Gastrocnemius medialis (tissue), 4 donors: ENCODE measurements at regions of chr4 and their contacts with region 1.

Region 1: DNA sequence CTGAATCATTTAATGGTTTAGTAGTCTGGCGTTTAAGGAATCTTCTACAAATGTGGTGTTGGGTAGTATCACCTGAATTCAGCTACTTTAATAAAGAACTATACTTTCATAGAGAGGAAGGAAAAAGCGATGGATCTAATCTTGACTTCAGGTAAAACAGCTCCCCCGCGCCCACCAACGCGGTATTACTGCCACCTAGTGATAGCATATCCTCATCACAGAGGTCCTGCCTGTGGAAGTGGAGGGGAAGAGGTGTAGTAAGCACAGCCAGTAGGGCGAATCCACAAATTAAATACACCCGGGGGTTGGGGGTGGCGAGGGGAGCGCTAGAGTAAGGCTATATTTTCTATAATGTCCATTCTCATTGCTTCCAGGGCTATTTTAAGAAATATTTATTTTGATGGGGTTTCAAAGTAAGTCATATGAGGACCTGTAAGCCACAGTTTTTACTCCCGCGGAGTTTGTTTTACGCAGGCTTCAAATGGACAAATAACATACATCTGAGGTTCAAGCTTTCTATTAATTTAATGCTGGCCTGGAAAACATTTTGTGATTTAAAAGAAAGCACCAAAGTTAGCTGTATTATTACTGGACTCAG is 8.3 kb upstream of the DAPP1 start:
- DNase-seq: peak; percentile 55 to 77
- ATAC-seq: peak; percentile 85 to 94
- H3K4me3 ChIP-seq: no peak overlapping the region
- H3K27ac ChIP-seq: peak overlapping the region in 1 of 4 donors; percentile 51
- H3K4me1 ChIP-seq: peaks cover 18 to 21% of the 10 kb centered on the region in 2 donors
- H3K27me3 ChIP-seq: no peaks in the 10 kb centered on the region
- CTCF ChIP-seq: peak; percentile 74 to 82 (median 78)
- POLR2A ChIP-seq: no peak

Region 2: DNA sequence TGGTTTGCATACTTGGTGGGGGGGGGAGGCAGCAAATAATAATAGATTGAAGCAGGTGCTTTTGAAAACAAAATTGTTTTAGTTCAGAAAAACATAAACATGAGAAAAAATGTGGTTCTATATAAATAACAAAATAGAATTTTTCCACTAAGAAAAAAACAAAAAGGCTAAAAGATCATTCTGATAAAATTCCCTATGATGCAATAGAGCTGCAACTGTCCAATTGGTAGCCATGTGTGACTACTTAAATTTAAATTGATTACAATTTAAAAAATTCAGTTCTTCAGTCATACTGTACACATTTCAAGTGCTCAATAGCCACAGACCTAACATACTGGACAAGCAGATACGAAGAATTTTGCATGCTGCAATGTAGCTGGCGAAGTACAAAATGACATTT is 255.5 kb before region 1 on chr4:
- in situ Hi-C with region 1: loop called (anchors 5 to 10 kb)
- intact Hi-C with region 1: no loop called
- DNase-seq: no peak
- ATAC-seq: no peak
- H3K4me3 ChIP-seq: no peak overlapping the region
- H3K27ac ChIP-seq: no peak overlapping the region
- H3K4me1 ChIP-seq: no peaks in the 10 kb centered on the region
- H3K27me3 ChIP-seq: no peaks in the 10 kb centered on the region
- CTCF ChIP-seq: no peak
- POLR2A ChIP-seq: no peak

Region 3: GRCh38 chr4:99615170-99615820 is 193.1 kb before region 1 on chr4:
- in situ Hi-C with region 1: no loop called
- intact Hi-C with region 1: loop called (anchors 5 kb)
- DNase-seq: peak; percentile 8 to 35
- ATAC-seq: peak; percentile 62 to 79
- H3K4me3 ChIP-seq: no peak overlapping the region
- H3K27ac ChIP-seq: peak overlapping the region in 2 of 4 donors; percentile 48 to 64
- H3K4me1 ChIP-seq: peaks cover 33 to 43% of the 10 kb centered on the region in 2 donors
- H3K27me3 ChIP-seq: no peaks in the 10 kb centered on the region
- CTCF ChIP-seq: peak in 1 of 5 experiments; percentile 37
- POLR2A ChIP-seq: no peak

Region 4: DNA sequence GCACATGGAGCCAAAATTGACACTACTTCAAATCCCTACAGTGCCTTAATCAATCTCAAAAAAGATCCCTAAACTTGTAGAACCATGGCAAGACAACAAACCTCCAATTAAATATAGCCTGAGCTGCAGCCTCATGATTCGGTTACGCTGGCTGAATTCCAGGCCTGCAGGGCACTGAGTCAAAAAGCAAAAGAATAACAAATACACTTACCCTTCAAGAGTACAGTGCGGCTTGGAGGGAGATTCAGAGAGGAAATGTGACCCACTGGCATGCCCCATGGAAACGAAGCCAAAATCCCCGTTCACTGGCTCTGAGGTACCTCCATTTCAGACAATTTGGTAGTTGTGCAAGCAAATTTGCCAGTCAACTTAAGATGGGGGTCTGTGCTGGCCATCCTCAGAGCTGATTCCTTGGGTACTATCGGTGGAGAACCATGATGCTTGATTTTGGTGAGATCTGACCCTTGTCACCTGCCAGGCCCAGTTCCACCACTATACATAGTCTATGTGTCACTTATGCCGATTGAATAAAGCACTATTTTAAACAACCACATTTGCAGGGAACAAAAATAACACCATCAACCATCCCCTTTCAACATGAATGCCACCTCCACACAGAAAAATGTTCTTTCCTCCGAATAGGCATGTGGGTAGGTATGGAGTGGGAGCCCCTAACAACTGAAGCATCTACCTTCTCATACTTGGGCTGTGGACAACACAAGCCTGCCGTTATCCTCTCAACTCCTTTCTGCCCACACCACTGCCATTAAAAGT is 152.9 kb before region 1 on chr4:
- in situ Hi-C with region 1: loop called in 1 of 4 experiments (anchors 10 kb)
- intact Hi-C with region 1: no loop called
- DNase-seq: peak; percentile 78 to 80
- ATAC-seq: peak; percentile 14 to 50
- H3K4me3 ChIP-seq: peak overlapping the region; percentile 62 to 75 (median 62)
- H3K27ac ChIP-seq: peak overlapping the region; percentile 94 to 99 (median 98)
- H3K4me1 ChIP-seq: peaks cover 47 to 55% of the 10 kb centered on the region in 2 donors
- H3K27me3 ChIP-seq: no peaks in the 10 kb centered on the region
- CTCF ChIP-seq: no peak
- POLR2A ChIP-seq: peak in 1 of 2 donors; percentile 30

Region 5: GRCh38 chr4:99723612-99724011 is 84.7 kb before region 1 on chr4:
- in situ Hi-C with region 1: no loop called
- intact Hi-C with region 1: loop called (anchors 5 kb)
- DNase-seq: peak; percentile 83 to 94
- ATAC-seq: peak; percentile 97 to 98
- H3K4me3 ChIP-seq: no peak overlapping the region
- H3K27ac ChIP-seq: peak overlapping the region; percentile 89 to 95 (median 91)
- H3K4me1 ChIP-seq: peaks cover 38 to 48% of the 10 kb centered on the region in 2 donors
- H3K27me3 ChIP-seq: no peaks in the 10 kb centered on the region
- CTCF ChIP-seq: no peak
- POLR2A ChIP-seq: no peak

Region 6: DNA sequence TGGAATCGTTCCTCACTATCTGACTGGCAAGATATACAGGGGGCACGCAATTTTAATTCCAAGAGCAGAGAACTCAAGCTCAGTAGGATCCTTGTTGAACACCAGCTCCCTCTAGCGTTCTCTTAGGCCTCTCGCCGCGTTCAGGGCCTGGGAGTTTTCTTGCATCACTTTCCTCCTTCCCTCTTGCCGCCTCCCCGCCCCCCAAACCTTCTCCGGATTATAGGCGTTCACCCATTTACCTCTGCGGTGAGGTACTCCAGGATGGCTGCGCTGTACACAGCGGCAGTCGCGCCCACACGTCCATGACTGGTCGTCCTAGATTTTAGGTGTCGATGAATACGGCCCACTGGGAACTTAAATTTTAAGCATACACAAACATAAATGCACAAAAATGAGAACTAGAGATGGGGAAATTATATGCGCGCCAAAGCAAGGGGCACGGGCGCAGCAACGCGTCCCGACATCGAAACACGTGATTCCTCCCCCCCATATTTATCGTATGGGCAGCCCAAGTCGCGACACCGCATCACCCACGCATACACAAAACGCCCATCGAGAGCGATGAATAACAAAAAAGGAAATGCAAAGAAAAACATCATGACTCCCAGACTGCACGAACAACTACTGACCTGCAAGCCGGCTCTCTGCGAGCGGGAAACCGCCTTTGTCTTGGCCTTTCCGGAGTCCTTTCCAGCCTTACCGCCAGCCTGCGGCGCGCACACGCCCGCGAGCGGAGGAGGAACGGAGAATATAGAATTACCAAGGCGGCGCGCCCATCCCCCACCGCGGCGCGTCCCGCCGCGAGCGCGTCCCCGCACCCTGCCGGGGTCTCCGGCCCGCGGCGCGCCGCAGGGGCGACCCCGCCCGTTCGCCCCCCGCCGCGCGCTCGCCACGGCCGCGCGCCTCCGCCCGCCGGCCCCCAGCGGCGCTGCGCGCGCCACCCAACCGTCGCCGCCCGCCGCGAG is 141.0 kb after region 1 on chr4:
- in situ Hi-C with region 1: no loop called
- intact Hi-C with region 1: loop called (anchors 1 kb)
- DNase-seq: peak; percentile 81 to 89
- ATAC-seq: peak; percentile 56 to 67
- H3K4me3 ChIP-seq: peak overlapping the region; percentile 79 to 95 (median 86)
- H3K27ac ChIP-seq: peak overlapping the region; percentile 96 to 98 (median 98)
- H3K4me1 ChIP-seq: peaks cover 30 to 40% of the 10 kb centered on the region in 2 donors
- H3K27me3 ChIP-seq: no peaks in the 10 kb centered on the region
- CTCF ChIP-seq: peak; percentile 73 to 93 (median 80)
- POLR2A ChIP-seq: no peak